Lower leg skin (tissue), 4 donors: ENCODE measurements at regions of chrX and their contacts with region 1.

Region 1: GRCh38 chrX:31092970-31093638 is 21.3 kb upstream of the FTHL17 start:
- DNase-seq: no peak
- H3K4me3 ChIP-seq: no peak overlapping the region
- CTCF ChIP-seq: no peak
- POLR2A ChIP-seq: no peak

Region 2: DNA sequence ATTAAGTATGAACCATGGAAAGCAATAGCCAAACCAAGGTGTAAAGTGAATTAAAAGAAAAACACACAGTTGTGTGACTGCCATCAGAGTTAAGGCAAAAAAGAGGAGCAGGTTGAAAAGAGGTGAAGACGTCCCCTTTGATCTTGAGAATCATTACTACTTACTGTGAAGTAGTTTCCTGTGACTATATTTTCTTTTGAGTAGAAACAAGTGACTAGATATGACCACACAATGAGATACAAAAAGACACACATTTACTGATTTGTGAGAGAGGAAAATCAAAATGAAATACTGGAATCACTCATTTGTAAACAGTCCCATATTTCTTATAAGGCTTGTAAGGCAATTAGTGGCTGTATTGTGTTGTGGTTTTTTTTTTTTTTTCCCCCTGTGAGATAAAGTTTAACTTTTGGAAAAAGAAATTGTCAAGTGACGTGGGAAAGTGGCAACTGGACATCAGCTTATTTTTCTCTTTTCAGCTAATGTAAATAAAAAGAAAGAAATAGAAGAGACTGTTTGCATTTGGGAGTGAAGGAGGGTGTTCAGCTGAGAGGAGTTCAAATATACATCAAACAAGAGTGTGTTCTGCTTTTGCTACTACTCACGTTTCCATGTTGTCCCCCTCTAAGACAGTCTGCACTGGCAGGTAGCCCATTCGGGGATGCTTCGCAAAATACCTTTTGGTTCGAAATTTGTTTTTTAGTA is 85.1 kb after region 1 on chrX:
- intact Hi-C with region 1: no loop called
- DNase-seq: no peak
- H3K4me3 ChIP-seq: no peak overlapping the region
- CTCF ChIP-seq: no peak
- POLR2A ChIP-seq: no peak

Region 3: GRCh38 chrX:32137525-32137924 is 1044.4 kb after region 1 on chrX:
- intact Hi-C with region 1: loop called (anchors 5 kb)
- DNase-seq: no peak
- H3K4me3 ChIP-seq: no peak overlapping the region
- CTCF ChIP-seq: no peak
- POLR2A ChIP-seq: no peak